PC-3 (cell line): ENCODE measurements at regions of chrX and their contacts with region 1.

Region 1: DNA sequence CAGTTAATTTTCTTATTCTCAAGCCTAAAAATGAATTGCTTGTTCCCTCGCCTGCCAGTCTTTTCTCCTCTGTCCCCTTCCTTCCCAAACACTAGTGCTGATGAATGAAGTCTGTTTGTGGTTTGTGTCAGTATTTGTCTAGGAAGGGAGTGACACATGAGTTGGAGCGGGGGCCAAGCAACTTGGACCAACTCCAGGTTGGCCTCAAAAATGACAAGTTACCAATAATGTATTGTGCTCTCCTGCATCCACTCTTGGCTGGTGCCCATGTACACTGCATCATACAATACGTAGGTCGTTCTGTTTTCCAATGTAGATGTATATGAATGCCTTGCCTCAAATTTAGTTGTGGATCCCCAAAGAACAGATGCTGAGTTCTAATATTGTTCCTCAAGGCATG is 223.0 kb upstream of the GPC4 start:
- DNase-seq: peak; percentile 96
- ATAC-seq: peak; percentile 90
- H3K4me3 ChIP-seq: peak overlapping the region; percentile 47; the same call in 1 of the 2 replicates
- H3K27ac ChIP-seq: peak overlapping the region; percentile 93
- H3K4me1 ChIP-seq: peaks cover 33% of the 10 kb centered on the region
- H3K27me3 ChIP-seq: no peaks in the 10 kb centered on the region
- CTCF ChIP-seq: no peak

Region 2: GRCh38 chrX:133418588-133418987 is 219.7 kb before region 1 on chrX:
- CTCF ChIA-PET with region 1: no interaction called
- POLR2A ChIA-PET with region 1: no interaction called
- intact Hi-C with region 1: no loop called
- DNase-seq: no peak
- ATAC-seq: no peak
- H3K4me3 ChIP-seq: no peak overlapping the region
- H3K27ac ChIP-seq: no peak overlapping the region
- H3K4me1 ChIP-seq: 0 out of 2 replicates have a peak, but pooled peaks cover 3% of the 10 kb centered on the region
- H3K27me3 ChIP-seq: no peaks in the 10 kb centered on the region
- CTCF ChIP-seq: no peak

Region 3: GRCh38 chrX:133544115-133544514 is 94.2 kb before region 1 on chrX:
- CTCF ChIA-PET with region 1: no interaction called
- POLR2A ChIA-PET with region 1: no interaction called
- intact Hi-C with region 1: loop called (anchors 1 kb)
- DNase-seq: peak; percentile 88
- ATAC-seq: peak; percentile 89
- H3K4me3 ChIP-seq: no peak overlapping the region
- H3K27ac ChIP-seq: peak overlapping the region; percentile 95
- H3K4me1 ChIP-seq: peaks cover 18% of the 10 kb centered on the region
- H3K27me3 ChIP-seq: no peaks in the 10 kb centered on the region
- CTCF ChIP-seq: no peak

Region 4: DNA sequence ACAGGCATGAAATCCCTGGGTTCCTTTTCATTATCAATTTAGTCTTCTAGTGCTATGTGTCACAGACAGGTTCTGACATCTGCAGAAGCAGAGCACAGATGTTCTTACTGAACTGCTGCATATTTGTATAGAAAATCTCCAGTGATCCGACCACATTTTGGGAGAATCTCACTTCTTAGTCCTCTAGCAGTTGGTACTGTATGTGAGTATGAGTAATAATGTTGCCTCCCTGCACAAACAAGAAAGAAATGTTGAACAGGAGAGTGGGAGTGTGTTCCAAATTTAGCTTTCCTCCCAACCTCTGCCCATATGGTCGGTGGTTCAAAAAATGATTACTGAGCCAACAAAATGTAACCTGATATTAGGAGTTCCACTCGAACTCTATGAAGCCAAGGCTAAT is 57.7 kb before region 1 on chrX:
- CTCF ChIA-PET with region 1: no interaction called
- POLR2A ChIA-PET with region 1: no interaction called
- intact Hi-C with region 1: loop called (anchors 2 kb)
- DNase-seq: peak; percentile 38
- ATAC-seq: peak; percentile 84
- H3K4me3 ChIP-seq: no peak overlapping the region
- H3K27ac ChIP-seq: no peak overlapping the region
- H3K4me1 ChIP-seq: peaks cover 11% of the 10 kb centered on the region
- H3K27me3 ChIP-seq: no peaks in the 10 kb centered on the region
- CTCF ChIP-seq: no peak

Region 5: DNA sequence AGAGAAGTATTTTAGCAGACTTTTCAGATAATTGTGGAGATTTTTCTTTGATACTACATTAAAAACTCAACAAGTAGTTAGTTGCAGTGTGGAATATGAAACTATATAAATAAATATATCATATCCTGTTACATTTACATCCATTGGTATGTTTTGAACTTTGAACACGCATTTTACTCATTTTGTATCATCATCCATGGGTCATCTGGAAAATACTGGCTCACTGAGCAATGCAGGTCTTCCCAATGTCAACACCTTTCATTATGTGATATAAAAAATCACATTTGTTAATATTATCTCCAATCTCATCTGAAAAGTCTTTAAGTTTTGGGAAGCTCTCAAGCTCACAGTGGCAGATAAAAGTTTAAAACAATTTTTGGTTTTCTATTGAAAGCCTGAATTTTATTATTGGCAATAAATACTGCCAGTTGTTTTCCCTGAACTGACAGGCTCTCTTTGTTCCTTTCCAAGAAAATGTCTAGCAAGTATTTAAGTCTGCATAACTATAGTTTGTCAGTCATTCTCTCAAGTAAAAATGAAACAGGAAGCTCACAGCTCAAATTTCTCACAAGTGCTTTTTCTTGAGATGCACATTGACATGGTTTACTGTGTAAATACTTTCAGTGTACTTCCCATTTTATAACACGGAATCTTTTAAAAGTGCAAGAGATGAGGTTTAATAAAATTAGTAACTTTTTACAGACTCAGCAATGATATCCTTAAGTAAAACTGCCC is 39.5 kb before region 1 on chrX:
- CTCF ChIA-PET with region 1: no interaction called
- POLR2A ChIA-PET with region 1: no interaction called
- intact Hi-C with region 1: loop called (anchors 5 kb)
- DNase-seq: peak; percentile 69
- ATAC-seq: peak; percentile 78
- H3K4me3 ChIP-seq: peak overlapping the region; percentile 14
- H3K27ac ChIP-seq: peak overlapping the region; percentile 79
- H3K4me1 ChIP-seq: peaks cover 18% of the 10 kb centered on the region
- H3K27me3 ChIP-seq: no peaks in the 10 kb centered on the region
- CTCF ChIP-seq: no peak